ENCODE measurements at regions of chr1 and their contacts with region 1.

Region 1: GRCh38 chr1:19287436-19288185 is 959 bp downstream of the AKR7A3 start:
- DNase-seq: peak; percentile 79
- H3K4me3 ChIP-seq: peak overlapping the region in 3 of 4 donors; percentile 38 to 64 (median 40)
- H3K27ac ChIP-seq: peak overlapping the region; percentile 79 to 87 (median 83)
- H3K4me1 ChIP-seq: peaks cover 4 to 34% (median 21%) of the 10 kb centered on the region in 4 donors
- H3K27me3 ChIP-seq: no peaks in the 10 kb centered on the region
- CTCF ChIP-seq: no peak
- EP300 ChIP-seq: peak; percentile 2
- POLR2A ChIP-seq: peak; percentile 54

Region 2: DNA sequence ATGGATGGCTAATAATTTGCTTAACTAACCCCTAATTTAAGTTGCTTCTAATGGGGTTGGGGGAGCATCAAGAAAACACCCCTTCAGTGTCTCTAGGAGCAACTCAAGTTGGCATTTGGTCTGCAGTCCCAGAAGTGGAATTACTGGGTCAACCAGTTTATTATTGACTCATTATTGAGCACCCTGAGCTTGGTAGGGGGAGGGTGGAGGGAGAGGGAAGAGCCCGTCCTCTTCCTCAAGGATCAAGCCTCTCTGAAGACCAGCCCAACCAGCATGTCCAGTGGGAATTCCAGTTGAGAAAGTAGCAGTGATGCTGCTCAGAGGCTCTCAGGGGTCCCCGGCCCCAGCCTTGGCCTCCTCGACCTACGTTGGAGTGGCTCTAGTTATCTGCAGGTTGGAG is 849.4 kb after region 1 on chr1:
- in situ Hi-C with region 1: no loop called
- intact Hi-C with region 1: loop called (anchors 5 kb)
- DNase-seq: no peak
- H3K4me3 ChIP-seq: no peak overlapping the region
- H3K27ac ChIP-seq: no peak overlapping the region
- H3K4me1 ChIP-seq: no peaks in the 10 kb centered on the region
- H3K27me3 ChIP-seq: no peaks in the 10 kb centered on the region
- CTCF ChIP-seq: no peak
- EP300 ChIP-seq: no peak
- POLR2A ChIP-seq: no peak